Aorta (tissue), 5 donors: ENCODE measurements at regions of chr4 and their contacts with region 1.

Region 1: DNA sequence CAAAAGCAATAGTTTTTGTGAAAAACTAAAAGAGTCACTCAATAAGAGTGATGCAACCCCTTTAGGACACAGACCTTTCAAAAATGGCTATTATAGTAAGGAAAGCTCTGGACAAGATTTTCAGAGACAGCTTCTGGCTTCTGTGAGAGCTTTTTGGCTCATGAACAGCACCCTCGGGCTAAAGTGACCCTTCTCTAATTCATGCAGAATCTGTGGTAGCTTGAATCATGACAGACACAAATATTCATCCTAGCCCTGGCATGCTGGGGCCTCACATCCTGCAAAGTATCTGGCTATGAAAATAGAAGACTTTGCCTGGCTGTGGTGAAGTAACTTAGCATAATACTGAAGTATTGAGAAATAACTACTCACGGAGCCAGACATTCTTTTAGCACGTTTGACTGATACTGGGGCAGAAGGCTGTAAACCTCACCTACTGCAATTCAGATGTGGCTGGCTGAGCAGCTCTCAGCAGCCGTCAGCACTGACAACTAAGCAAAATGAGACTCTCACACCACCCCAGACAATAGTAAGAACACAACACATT is 327.3 kb downstream of the MAPK10 start:
- DNase-seq: peak in 1 of 2 donors; percentile 63
- ATAC-seq: peak; percentile 90
- H3K4me3 ChIP-seq: peak overlapping the region in 1 of 2 donors; percentile 59
- H3K27ac ChIP-seq: peak overlapping the region; percentile 99
- H3K4me1 ChIP-seq: peaks cover 1 to 4% of the 10 kb centered on the region in 2 donors
- H3K27me3 ChIP-seq: no peaks in the 10 kb centered on the region

Region 2: DNA sequence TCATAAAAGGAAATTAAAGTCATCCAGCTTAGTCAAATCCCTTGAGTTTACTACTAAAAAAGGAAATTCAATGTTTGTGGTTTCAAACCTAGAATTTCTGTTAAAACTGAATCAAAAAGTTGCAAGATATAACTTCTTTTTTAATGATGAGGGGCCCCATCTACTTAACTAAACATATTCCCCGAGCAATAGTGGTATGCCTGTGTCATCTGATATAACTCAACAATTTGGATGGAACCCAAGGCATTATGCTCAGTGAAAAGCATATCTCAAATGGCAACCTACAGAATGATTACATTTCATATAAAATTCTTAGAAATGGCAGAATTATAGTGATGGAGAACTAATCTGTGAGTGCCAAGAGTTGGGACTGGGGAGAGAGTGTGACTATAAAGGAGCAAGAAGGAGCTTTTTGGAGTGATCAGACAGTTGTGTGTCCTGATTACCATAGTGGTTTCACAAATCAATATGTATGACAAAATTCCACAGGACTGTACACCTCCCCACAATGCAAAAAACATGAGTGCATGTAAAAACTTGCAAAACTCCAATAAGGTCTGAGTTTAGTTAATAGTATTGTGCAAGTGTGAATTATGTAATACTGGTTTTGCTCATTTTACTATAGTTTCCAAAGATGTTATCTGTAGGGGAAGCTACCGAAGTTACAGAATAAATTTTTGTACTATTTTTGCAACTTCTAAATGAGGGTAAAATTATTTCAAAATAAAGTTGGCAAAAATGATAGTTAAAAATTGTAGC is 234.4 kb before region 1 on chr4:
- intact Hi-C with region 1: loop called in 1 of 2 experiments (anchors 5 kb)
- DNase-seq: no peak
- ATAC-seq: no peak
- H3K4me3 ChIP-seq: no peak overlapping the region
- H3K27ac ChIP-seq: no peak overlapping the region
- H3K4me1 ChIP-seq: peaks cover 0 to 1% of the 10 kb centered on the region in 2 donors
- H3K27me3 ChIP-seq: no peaks in the 10 kb centered on the region

Region 3: GRCh38 chr4:86011117-86011516 is 21.4 kb before region 1 on chr4:
- intact Hi-C with region 1: loop called in 1 of 2 experiments (anchors 2 kb)
- DNase-seq: no peak
- ATAC-seq: no peak
- H3K4me3 ChIP-seq: no peak overlapping the region
- H3K27ac ChIP-seq: no peak overlapping the region
- H3K4me1 ChIP-seq: peaks cover 3 to 6% of the 10 kb centered on the region in 2 donors
- H3K27me3 ChIP-seq: no peaks in the 10 kb centered on the region